Activated CD8-positive, alpha-beta T cell treated with anti-CD3 and anti-CD28 coated beads for 36 hours (primary cell): ENCODE measurements at regions of chr6 and their contacts with region 1.

Region 1: GRCh38 chr6:2749969-2750600 is 637 bp downstream of the MYLK4 start:
- DNase-seq: peak; percentile 82
- ATAC-seq: peak; percentile 74
- H3K4me3 Mint-ChIP-seq: no peak overlapping the region
- H3K27ac Mint-ChIP-seq: no peak overlapping the region
- H3K4me1 Mint-ChIP-seq: peaks cover 7% of the 10 kb centered on the region
- H3K27me3 Mint-ChIP-seq: peaks cover 8% of the 10 kb centered on the region
- CTCF ChIP-seq: peak; percentile 91

Region 2: DNA sequence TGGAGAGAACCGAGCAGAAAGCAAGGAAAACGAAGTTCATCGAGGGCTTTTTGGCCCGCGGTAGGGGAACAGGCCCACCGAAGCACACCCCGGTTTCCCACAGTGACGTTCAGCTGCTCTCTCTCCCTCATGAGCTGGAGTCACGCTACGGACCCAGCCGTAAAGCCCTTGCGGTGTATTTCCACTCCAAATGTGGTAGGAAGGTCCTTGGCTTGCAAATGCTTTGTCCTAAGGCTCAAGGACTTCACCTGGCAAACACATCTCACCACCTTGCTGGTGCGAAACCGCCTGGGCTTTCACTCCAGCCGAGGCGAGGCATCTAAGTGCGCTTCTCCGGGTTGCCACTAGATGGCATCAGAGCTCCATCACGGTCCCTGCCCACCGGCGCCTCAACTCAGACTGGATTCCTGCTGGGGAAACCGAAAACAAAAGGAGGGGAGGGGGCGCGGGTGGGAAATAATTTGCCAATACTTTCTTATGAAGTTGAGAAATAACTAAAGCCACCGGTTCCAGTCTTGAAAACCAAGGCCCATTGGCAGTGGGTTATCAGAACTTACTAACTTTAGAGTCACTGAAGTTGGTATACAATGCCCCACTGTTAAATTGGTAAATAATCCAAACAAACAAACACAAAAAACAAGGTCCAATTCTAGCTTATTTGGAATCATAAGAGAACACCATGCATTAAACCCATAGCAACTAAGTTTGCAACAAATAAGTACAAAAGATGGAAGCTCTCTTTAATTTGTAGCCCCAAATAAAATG is 1153.8 kb before region 1 on chr6:
- CTCF ChIA-PET with region 1: interaction called, 21 read pairs
- POLR2A ChIA-PET with region 1: no interaction called
- intact Hi-C with region 1: loop called (anchors 10 kb)
- DNase-seq: peak; percentile 67
- ATAC-seq: peak; percentile 80
- H3K4me3 Mint-ChIP-seq: no peak overlapping the region
- H3K27ac Mint-ChIP-seq: no peak overlapping the region
- H3K4me1 Mint-ChIP-seq: no peaks in the 10 kb centered on the region
- H3K27me3 Mint-ChIP-seq: peaks cover 48% of the 10 kb centered on the region
- CTCF ChIP-seq: peak; percentile 92

Region 3: DNA sequence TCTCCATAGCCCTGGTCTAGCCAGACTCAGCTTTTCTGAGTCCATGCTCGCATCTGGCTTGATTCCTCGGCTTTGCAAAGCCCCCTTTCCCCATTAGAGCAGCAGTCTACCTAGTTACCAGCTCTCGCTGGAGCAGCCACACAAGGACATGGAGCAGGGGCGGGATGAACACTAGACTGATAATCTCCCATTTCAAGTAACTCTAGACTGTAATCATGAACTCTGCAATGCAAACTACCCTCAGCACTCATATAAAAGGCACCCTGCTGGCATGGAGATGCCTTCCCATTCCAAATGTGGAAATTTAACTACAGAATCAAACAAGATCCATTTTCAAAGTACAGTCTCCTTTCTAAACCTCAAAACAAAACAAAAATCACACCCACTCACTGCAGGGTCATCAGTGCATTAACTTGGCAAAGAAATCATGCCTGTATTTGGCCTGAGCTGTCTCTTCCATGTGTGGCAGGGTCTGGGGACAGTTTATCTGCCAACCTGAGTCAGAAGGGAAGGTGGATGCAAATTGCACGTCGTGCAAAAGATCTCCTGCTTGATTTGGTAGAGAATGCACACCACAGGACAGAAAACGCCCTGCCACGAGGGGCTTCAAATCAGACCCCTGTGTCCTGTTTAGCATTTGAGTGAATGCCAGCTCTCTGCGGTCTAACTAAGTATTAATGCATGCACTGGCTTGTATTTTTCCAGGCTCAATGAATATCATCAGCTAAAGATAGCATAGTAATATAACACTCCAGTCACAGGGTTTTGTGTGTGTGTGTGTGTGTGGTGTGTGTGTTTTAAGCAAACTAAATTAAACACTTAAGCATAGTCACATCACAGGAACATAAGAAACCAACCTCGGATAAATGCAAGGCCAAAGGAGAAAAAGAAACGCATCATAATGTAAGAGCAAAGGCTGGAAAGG is 84.7 kb before region 1 on chr6:
- CTCF ChIA-PET with region 1: no interaction called
- POLR2A ChIA-PET with region 1: no interaction called
- intact Hi-C with region 1: no loop called
- DNase-seq: no peak
- ATAC-seq: no peak
- H3K4me3 Mint-ChIP-seq: no peak overlapping the region
- H3K27ac Mint-ChIP-seq: no peak overlapping the region
- H3K4me1 Mint-ChIP-seq: peaks cover 5% of the 10 kb centered on the region
- H3K27me3 Mint-ChIP-seq: peaks cover 4% of the 10 kb centered on the region
- CTCF ChIP-seq: no peak

Region 4: DNA sequence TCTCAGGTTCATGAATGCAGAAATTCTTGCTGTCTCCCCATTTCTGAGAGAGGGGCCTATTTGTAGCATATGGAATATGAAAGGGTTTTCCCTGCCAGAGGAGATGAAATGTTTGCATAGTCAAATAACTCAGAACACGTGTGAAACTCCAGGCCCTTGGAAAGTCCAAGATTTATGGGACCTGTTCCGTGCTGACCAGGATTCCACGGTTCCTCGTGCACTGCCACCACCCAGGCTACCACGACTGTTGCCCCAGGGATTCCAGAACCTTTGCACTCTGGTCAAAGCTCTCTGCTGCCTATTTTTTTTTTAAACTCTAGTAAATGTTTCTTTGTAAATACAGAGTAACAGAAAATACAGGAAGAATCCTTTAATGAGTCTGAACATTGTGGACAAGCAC is 34.4 kb before region 1 on chr6:
- CTCF ChIA-PET with region 1: interaction called, 10 read pairs
- POLR2A ChIA-PET with region 1: no interaction called
- intact Hi-C with region 1: no loop called
- DNase-seq: no peak
- ATAC-seq: no peak
- H3K4me3 Mint-ChIP-seq: no peak overlapping the region
- H3K27ac Mint-ChIP-seq: no peak overlapping the region
- H3K4me1 Mint-ChIP-seq: no peaks in the 10 kb centered on the region
- H3K27me3 Mint-ChIP-seq: no peaks in the 10 kb centered on the region
- CTCF ChIP-seq: no peak

Region 5: GRCh38 chr6:2725999-2726567 is 24.0 kb before region 1 on chr6:
- CTCF ChIA-PET with region 1: interaction called, 12 read pairs
- POLR2A ChIA-PET with region 1: no interaction called
- intact Hi-C with region 1: no loop called
- DNase-seq: no peak
- ATAC-seq: no peak
- H3K4me3 Mint-ChIP-seq: no peak overlapping the region
- H3K27ac Mint-ChIP-seq: no peak overlapping the region
- H3K4me1 Mint-ChIP-seq: no peaks in the 10 kb centered on the region
- H3K27me3 Mint-ChIP-seq: no peaks in the 10 kb centered on the region
- CTCF ChIP-seq: no peak

Region 6: DNA sequence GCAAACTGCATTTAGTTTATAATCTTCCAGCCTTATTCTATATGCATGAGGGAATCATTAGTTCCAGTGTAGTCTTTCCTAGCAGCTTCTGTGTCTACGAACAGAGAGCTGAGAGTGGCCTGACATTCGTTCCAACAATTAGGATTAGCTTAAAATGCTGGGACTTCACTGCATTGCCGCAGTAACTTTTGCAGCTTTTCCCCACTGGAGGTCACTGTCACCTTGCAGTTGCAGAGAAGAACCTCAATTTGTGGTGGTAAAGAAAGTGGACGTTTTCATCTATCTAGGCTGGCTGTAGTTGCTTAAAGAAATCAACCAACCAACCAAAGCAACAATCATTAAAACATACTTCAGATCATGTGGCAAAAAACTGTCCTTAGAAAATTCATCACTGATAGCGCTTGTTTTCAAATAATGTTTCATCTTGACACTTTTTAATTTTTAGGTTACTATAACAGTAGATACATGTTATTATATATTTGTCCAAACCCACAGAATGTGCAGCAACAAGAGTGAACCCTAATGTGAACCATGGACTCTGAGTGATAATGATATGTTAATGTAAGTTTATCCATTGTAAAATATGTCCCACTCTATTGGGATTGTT is 11.6 kb before region 1 on chr6:
- CTCF ChIA-PET with region 1: interaction called, 224 read pairs
- POLR2A ChIA-PET with region 1: no interaction called
- intact Hi-C with region 1: no loop called
- DNase-seq: peak; percentile 70
- ATAC-seq: peak; percentile 63
- H3K4me3 Mint-ChIP-seq: no peak overlapping the region
- H3K27ac Mint-ChIP-seq: no peak overlapping the region
- H3K4me1 Mint-ChIP-seq: peaks cover 5% of the 10 kb centered on the region
- H3K27me3 Mint-ChIP-seq: peaks cover 2% of the 10 kb centered on the region
- CTCF ChIP-seq: peak; percentile 73

Region 7: GRCh38 chr6:2765166-2765895 is 15.2 kb after region 1 on chr6 and contains the start of gene WRNIP1:
- CTCF ChIA-PET with region 1: interaction called, 81 read pairs
- POLR2A ChIA-PET with region 1: no interaction called
- intact Hi-C with region 1: no loop called
- DNase-seq: peak; percentile 98
- ATAC-seq: peak; percentile 89
- H3K4me3 Mint-ChIP-seq: peak within 1 kb of the TSS; percentile 80
- H3K27ac Mint-ChIP-seq: peak within 1 kb of the TSS; percentile 99
- H3K4me1 Mint-ChIP-seq: peaks cover 40% of the 10 kb centered on the region
- H3K27me3 Mint-ChIP-seq: no peaks in the 10 kb centered on the region
- CTCF ChIP-seq: peak; percentile 54
- total RNA-seq, gene WRNIP1: 36.1 to 36.6 TPM